PC-3 (cell line): ENCODE measurements at regions of chr20 and their contacts with region 1.

Region 1: GRCh38 chr20:50987592-50988210 is 29.1 kb downstream of the MOCS3 start:
- DNase-seq: peak; percentile 99
- ATAC-seq: peak; percentile 97
- H3K4me3 ChIP-seq: 0 out of 2 replicates have a peak overlapping the region, but pooled peaks have one; percentile 10
- H3K27ac ChIP-seq: no peak overlapping the region
- H3K4me1 ChIP-seq: peaks cover 18% of the 10 kb centered on the region
- H3K27me3 ChIP-seq: no peaks in the 10 kb centered on the region
- CTCF ChIP-seq: peak; percentile 98

Region 2: GRCh38 chr20:50804418-50805064 is 183.2 kb before region 1 on chr20:
- CTCF ChIA-PET with region 1: no interaction called
- POLR2A ChIA-PET with region 1: no interaction called
- intact Hi-C with region 1: no loop called
- DNase-seq: no peak
- ATAC-seq: no peak
- H3K4me3 ChIP-seq: no peak overlapping the region
- H3K27ac ChIP-seq: no peak overlapping the region
- H3K4me1 ChIP-seq: no peaks in the 10 kb centered on the region
- H3K27me3 ChIP-seq: no peaks in the 10 kb centered on the region
- CTCF ChIP-seq: no peak

Region 3: GRCh38 chr20:51233345-51233744 is 245.6 kb after region 1 on chr20:
- CTCF ChIA-PET with region 1: no interaction called
- POLR2A ChIA-PET with region 1: no interaction called
- intact Hi-C with region 1: no loop called
- DNase-seq: peak; percentile 31
- ATAC-seq: no peak
- H3K4me3 ChIP-seq: no peak overlapping the region
- H3K27ac ChIP-seq: no peak overlapping the region
- H3K4me1 ChIP-seq: no peaks in the 10 kb centered on the region
- H3K27me3 ChIP-seq: peaks cover 25% of the 10 kb centered on the region
- CTCF ChIP-seq: no peak

Region 4: DNA sequence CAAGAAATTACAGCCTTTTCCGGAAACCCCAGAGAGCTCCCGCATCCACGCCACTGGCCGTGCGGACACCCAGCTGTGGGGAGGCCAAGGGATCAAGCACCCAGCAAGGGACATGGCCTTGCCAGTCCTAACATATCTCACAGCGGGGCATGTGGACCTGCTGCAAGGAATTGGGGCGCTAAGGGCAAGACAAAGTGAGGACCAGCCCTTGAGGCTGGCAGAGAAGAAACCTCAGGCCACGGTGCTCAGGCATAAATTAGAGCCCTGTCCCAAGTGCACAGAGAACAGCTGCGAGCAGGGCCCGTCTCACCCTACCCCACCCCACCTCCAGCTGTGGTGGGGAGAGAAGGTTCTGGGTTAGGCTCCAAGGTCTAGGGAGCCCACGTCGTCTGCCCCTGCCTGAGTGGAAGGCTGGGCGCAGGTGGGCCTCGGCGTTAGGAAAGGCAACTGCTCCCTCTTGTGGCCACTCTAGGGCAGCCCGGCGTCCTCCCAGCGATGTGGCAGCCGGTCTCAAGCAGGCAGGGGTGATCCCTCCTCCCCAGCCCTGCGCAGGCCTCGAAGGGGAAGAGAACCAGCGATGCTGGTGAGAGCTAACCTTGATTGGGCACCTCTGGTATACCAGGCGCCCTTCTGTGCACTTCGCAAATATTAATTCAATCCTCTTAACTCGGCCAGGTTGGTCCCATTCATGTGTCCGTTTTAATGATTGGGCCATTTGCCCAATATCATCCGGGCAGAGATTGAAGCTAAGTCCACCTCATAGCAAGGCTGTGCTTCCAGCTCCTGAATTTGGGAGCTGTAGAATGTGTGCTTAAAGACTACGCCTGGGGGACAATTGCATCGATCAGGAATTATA is 319.0 kb after region 1 on chr20:
- CTCF ChIA-PET with region 1: interaction called, 26 read pairs
- POLR2A ChIA-PET with region 1: no interaction called
- intact Hi-C with region 1: loop called (anchors 1 kb)
- DNase-seq: peak; percentile 92
- ATAC-seq: peak; percentile 100
- H3K4me3 ChIP-seq: peak overlapping the region; percentile 2; the same call in 1 of the 2 replicates
- H3K27ac ChIP-seq: no peak overlapping the region
- H3K4me1 ChIP-seq: peaks cover 19% of the 10 kb centered on the region
- H3K27me3 ChIP-seq: no peaks in the 10 kb centered on the region
- CTCF ChIP-seq: peak; percentile 100

Region 5: GRCh38 chr20:51385646-51386530 is 398.2 kb after region 1 on chr20:
- CTCF ChIA-PET with region 1: interaction called, 4 read pairs
- POLR2A ChIA-PET with region 1: no interaction called
- intact Hi-C with region 1: loop called (anchors 10 kb)
- DNase-seq: peak; percentile 74
- ATAC-seq: no peak
- H3K4me3 ChIP-seq: no peak overlapping the region
- H3K27ac ChIP-seq: no peak overlapping the region; the same call in 1 of the 2 replicates
- H3K4me1 ChIP-seq: peaks cover 64% of the 10 kb centered on the region
- H3K27me3 ChIP-seq: no peaks in the 10 kb centered on the region
- CTCF ChIP-seq: peak; percentile 95

Region 6: GRCh38 chr20:51595058-51595532 is 607.4 kb after region 1 on chr20:
- CTCF ChIA-PET with region 1: interaction called, 14 read pairs
- POLR2A ChIA-PET with region 1: no interaction called
- intact Hi-C with region 1: loop called (anchors 10 kb)
- DNase-seq: peak; percentile 91
- ATAC-seq: peak; percentile 97
- H3K4me3 ChIP-seq: no peak overlapping the region
- H3K27ac ChIP-seq: 0 out of 2 replicates have a peak overlapping the region, but pooled peaks have one; percentile 6
- H3K4me1 ChIP-seq: peaks cover 4% of the 10 kb centered on the region; the same call in 1 of the 2 replicates
- H3K27me3 ChIP-seq: no peaks in the 10 kb centered on the region
- CTCF ChIP-seq: peak; percentile 97

Region 7: GRCh38 chr20:51984931-51985415 is 997.3 kb after region 1 on chr20:
- CTCF ChIA-PET with region 1: no interaction called
- POLR2A ChIA-PET with region 1: no interaction called
- intact Hi-C with region 1: loop called (anchors 10 kb)
- DNase-seq: peak; percentile 99
- ATAC-seq: peak; percentile 95
- H3K4me3 ChIP-seq: no peak overlapping the region
- H3K27ac ChIP-seq: peak overlapping the region; percentile 36
- H3K4me1 ChIP-seq: peaks cover 13% of the 10 kb centered on the region
- H3K27me3 ChIP-seq: no peaks in the 10 kb centered on the region
- CTCF ChIP-seq: no peak